Left cardiac atrium (tissue), 4 donors: ENCODE measurements at regions of chr9 and their contacts with region 1.

Region 1: DNA sequence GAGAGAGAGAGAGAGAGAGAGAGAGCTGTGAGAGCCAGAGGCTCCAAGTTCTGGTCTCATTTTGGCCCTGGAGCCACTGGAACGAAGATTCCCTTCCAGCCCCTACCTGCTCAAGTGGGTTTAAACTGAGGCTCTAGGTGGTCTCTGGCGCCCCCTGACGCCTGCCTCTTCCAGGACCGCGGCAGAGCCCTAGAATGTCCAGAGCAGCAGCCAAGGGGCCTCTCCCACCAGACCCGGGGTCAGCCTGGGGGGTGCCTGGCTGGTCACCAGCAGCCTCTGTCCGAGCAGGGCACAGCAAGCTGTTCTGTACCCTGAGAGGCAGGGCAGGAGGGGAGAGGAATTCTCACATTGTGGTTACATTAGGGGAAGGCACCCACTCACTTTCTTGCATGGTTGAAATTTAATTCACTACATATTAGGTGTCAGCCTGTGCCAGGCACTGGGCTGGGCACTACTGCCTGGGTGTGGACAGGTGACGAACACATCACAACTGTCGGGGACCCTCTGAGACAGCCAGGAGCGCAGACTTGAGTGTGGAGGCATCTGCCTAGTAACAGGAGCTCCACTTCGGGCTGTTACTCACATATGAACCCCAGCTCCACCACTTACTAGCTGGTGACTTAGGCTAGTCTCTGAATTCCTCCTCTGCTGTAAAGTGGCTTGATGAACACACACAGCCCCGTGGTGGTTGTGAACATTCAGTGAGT is 44.5 kb downstream of the AMBP start:
- DNase-seq: peak; percentile 51
- ATAC-seq: peak; percentile 75 to 77

Region 2: DNA sequence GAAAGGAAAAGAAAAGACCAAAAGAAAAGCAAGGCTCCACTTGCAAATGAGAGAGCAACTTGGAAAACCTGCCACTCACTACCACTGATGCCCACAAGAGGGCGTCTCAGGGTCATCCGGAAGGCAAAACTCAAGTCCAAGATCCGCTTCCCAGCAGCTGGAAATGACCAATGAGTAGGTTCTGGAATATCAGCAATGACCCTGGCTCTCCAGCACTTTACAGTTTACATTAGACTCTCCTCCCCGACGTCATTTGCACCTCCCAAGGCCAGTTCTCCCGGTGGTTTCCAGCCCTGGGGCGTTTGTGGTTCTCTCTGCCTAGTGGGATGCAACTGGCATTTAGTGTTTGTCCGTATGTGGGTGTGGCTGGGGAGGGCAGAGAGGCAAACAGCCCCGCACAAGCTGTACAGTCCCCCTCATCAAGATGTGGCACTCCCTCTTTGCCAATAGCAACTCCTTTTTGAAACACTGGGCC is 351.2 kb before region 1 on chr9:
- intact Hi-C with region 1: loop called (anchors 5 kb)
- DNase-seq: peak; percentile 73
- ATAC-seq: peak; percentile 43 to 63

Region 3: DNA sequence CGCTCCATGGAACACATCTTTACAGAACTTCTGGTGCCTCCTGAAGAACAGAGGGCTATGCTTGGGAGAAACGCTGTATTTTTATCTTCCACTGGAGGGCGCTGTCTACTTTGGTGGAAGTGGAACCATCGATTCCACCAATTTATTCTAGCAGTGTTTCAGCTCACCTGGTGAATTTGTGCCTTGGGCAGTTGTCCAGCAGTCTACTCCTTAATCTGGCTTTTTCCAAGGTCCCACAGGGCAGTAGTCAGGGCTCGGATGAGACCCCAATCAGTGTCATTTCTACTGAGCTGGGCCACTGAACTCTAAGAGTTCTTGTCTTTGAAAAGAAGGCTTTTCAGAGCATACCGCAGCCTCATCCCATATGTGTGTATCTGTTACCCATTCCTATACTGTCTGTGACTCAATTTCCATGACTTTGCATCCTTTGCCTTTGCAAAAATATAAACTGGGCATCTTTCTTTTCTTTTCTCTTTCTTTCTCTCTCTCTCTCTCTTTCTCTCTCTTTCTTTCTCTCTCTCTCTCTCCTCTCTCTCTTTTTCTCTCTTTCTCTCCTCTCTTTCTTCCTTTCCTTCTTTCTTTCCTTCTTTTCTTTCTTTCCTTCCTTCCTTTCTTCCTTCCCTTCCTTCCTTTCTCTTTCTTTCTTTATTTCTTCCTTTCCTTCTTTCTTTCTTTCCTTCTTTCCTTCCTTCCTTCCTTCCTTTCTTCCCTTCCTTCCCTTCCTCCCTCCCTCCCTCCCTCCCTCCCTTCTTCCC is 295.9 kb before region 1 on chr9:
- intact Hi-C with region 1: loop called in 1 of 2 experiments (anchors 5 kb)
- DNase-seq: no peak
- ATAC-seq: no peak

Region 4: DNA sequence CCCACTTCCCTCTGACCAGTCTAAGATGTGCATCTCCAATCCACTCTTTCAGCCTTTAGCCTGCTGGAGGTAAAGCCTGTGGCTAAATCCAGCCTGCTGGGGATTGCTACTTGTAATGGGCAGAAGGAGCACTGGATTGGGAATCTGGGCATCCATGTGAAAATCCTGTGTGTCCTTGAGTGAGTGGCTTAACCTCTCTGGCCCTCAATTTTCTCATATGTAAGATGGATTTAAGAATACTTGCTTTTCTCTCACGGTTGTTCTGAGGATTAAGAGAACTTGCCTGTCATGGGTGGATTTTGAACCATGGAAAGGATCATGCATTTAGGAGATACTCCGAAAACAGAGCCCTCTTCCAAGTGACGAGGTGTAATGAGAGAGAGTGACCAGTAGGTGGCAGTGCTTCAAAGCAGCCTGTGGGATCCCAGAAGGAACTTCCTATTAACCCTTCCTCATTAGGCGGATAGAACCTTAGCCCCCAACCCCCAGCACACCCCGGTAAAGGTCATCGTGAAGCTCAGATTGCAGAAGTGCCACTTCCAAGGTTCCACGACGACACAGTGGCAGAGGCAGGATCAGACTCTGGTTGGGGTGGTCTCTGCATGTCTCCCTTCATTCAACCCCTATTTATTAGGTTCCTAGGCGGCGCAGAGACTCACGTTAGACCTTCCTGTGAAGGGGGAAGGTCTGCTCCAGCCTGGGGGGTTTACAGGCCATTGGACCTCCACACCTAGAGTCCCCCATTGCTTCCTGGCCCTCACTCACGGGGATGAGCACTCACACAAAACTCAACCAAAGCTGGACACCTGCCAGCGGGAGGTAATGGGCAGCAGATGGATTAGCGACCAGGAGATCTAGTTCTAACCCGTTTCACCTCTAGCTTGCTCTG is 226.1 kb before region 1 on chr9:
- intact Hi-C with region 1: loop called (anchors 1 to 5 kb)
- DNase-seq: peak; percentile 33
- ATAC-seq: peak; percentile 72 to 80

Region 5: DNA sequence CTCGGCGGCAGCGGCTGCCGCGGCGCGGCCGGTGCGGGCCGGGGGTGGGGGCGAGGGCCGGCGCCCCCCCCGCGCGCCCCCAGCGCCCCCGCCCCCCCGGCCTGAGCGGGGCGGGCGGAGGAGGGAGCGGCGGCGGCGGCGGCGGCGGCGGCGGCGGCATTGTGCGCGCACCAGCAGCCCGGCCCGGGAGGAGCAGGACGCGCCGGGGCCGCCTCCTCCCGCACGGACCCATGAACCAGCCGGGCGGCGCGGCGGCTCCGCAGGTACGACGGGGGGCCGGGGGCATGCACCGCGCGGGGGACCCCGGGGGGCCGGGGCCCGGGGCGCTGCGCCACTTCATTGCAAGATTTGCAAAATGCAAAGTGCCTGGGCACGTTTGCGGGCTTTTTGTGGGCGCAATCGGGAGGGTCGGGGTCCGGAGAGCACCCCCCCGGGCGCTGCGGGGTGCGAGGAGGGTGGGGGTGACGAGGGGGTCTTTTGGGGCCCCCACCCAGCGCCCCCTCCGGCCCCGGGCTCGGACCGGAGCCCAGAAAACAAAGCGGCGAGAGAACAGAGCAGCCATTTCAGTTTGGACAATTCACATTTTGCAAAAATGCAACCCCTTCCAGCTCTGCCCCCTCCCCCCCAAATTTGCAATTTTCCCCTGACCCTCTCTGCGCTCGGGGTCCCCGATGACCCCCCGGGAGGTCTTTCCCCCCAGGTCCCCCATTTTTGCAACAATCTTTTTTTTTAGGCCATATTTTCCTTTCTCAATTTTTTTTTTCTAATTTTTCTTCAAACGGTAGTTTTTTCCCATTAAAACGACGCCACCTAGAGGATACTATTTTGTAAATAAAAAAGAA is 157.2 kb before region 1 on chr9 and contains the start of gene ZNF618:
- intact Hi-C with region 1: loop called in 1 of 2 experiments (anchors 10 kb)
- DNase-seq: peak; percentile 47
- ATAC-seq: peak; percentile 84 to 85
- total RNA-seq, gene ZNF618: 4.0 to 4.1 TPM

Region 6: DNA sequence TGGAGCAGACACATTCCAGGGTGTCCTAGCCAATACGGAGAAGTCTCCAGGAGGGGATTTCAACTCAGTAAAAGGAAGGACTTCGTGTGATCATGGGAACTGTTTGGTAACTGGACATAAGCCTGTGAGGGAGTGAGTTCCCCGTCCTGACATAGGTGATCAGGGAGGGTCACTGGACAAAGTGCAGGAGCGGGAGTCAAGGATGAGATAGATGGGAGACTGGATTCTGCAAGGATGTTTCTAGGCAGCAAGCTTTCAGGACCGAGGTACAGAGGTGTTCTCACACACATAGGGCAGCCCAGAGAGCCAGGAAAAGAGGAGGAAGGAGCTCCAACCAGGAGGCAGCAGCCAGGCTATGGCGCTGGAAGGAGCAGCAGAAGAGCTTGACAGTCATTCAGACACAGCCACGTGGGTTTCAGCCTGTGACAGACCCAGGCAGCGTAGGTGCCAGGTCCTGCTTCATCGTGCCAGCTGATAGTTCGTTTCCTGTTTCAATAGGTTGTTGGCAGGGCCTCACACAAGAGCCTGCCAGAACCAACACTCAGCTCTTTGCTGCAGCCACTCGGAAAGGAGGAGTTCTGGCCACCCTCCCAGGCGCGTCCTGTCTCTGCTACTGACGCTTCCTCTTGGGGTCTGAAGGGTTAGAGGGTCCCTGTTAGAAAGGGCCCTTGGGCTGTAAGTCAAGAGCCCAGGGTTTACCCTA is 39.6 kb before region 1 on chr9:
- intact Hi-C with region 1: loop called in 1 of 2 experiments (anchors 10 kb)
- DNase-seq: peak; percentile 94
- ATAC-seq: peak; percentile 89 to 90